ENCODE measurements at regions of chr3 and their contacts with region 1.

Region 1: GRCh38 chr3:102089904-102090492 is 240.7 kb downstream of the NFKBIZ start:
- DNase-seq: peak; percentile 89
- ATAC-seq: peak; percentile 89
- H3K4me3 ChIP-seq: no peak overlapping the region
- H3K27ac ChIP-seq: peak overlapping the region; percentile 97
- H3K4me1 ChIP-seq: peaks cover 30% of the 10 kb centered on the region
- H3K27me3 ChIP-seq: no peaks in the 10 kb centered on the region
- CTCF ChIP-seq: no peak

Region 2: DNA sequence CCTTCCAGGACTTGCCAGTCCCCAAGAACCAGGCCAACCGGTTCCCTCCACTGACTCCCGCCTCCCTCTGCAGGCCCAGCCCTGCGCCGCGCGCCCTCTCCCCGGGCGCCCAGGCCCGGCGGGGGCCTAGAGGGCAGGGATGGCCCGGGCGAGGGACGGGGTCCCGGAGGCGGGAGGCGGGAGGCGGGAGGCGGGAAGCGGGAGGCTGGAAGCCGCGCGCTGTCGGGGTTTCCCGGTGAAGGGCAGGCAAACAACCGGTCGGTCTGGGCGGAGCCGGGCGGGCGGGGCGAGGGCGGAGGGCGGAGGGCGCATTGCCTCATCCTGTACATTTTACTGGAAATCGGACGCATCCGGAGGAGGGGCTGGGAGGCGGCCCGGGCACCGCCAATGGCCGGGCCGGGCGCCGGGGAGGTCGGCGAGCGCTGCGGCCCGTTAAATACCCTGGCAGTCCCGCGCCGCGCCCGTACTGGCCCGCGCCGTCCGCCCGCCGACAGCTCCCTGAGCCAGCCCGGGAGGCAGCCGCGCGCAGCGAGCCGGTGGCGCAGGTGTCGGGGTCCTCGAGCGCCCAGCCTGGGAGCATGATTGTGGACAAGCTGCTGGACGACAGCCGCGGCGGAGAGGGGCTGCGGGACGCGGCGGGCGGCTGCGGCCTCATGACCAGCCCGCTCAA is 240.8 kb before region 1 on chr3 and contains the start of gene NFKBIZ:
- CTCF ChIA-PET with region 1: no interaction called
- POLR2A ChIA-PET with region 1: no interaction called
- intact Hi-C with region 1: loop called (anchors 5 kb)
- DNase-seq: peak; percentile 95
- ATAC-seq: peak; percentile 77
- H3K4me3 ChIP-seq: peak within 1 kb of the TSS; percentile 98
- H3K27ac ChIP-seq: peak within 1 kb of the TSS; percentile 76
- H3K4me1 ChIP-seq: peaks cover 23% of the 10 kb centered on the region
- H3K27me3 ChIP-seq: no peaks in the 10 kb centered on the region
- CTCF ChIP-seq: no peak
- total RNA-seq, gene NFKBIZ: 63.0 and 70.2 TPM in 2 replicates

Region 3: DNA sequence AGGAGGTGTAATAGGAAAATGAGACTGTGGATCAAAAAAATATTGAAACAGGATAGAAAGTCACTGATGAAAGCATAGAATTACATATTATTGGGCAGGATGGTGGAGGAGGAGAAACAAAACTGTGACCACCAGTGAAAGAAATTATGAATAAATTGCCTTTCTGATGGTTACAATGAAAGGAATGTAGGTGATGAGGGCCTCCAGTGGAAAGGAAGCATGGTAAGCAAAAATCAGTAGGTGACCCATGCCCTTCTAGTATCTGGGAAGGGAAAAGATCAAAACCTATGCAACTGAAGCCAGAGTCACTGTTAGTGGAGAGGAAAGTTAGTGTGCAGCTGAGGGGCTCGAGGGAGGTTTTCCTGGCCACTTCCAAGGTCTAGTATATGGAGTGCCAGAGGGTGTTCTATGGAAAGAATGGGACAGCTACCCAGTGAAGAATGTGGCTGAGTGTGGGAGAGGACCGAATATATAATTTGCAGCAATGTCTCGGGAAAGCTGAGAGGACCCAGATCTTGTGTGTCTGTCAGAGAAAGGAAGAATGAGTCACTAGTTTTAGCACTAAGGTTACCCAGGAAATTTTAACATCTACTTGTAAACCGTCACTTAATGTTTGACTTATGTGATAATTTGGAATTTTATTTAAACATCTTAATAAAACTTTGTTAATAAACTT is 94.5 kb before region 1 on chr3:
- CTCF ChIA-PET with region 1: no interaction called
- POLR2A ChIA-PET with region 1: no interaction called
- intact Hi-C with region 1: loop called (anchors 5 kb)
- DNase-seq: peak; percentile 63
- ATAC-seq: peak; percentile 87
- H3K4me3 ChIP-seq: no peak overlapping the region
- H3K27ac ChIP-seq: peak overlapping the region; percentile 61
- H3K4me1 ChIP-seq: peaks cover 27% of the 10 kb centered on the region
- H3K27me3 ChIP-seq: no peaks in the 10 kb centered on the region
- CTCF ChIP-seq: no peak

Region 4: GRCh38 chr3:102053375-102053989 is 36.5 kb before region 1 on chr3:
- CTCF ChIA-PET with region 1: no interaction called
- POLR2A ChIA-PET with region 1: no interaction called
- intact Hi-C with region 1: loop called (anchors 1 kb)
- DNase-seq: peak; percentile 80
- ATAC-seq: peak; percentile 96
- H3K4me3 ChIP-seq: no peak overlapping the region
- H3K27ac ChIP-seq: peak overlapping the region; percentile 15
- H3K4me1 ChIP-seq: peaks cover 17% of the 10 kb centered on the region
- H3K27me3 ChIP-seq: no peaks in the 10 kb centered on the region
- CTCF ChIP-seq: no peak

Region 5: GRCh38 chr3:102124301-102125158 is 34.5 kb after region 1 on chr3:
- CTCF ChIA-PET with region 1: no interaction called
- POLR2A ChIA-PET with region 1: no interaction called
- intact Hi-C with region 1: loop called (anchors 1 kb)
- DNase-seq: peak; percentile 52
- ATAC-seq: peak; percentile 49
- H3K4me3 ChIP-seq: no peak overlapping the region
- H3K27ac ChIP-seq: peak overlapping the region; percentile 88
- H3K4me1 ChIP-seq: peaks cover 35% of the 10 kb centered on the region
- H3K27me3 ChIP-seq: no peaks in the 10 kb centered on the region
- CTCF ChIP-seq: no peak

Region 6: GRCh38 chr3:102136183-102136582 is 46.2 kb after region 1 on chr3:
- CTCF ChIA-PET with region 1: no interaction called
- POLR2A ChIA-PET with region 1: no interaction called
- intact Hi-C with region 1: loop called (anchors 2 kb)
- DNase-seq: peak; percentile 84
- ATAC-seq: peak; percentile 94
- H3K4me3 ChIP-seq: peak overlapping the region; percentile 39; the same call in 1 of the 2 replicates
- H3K27ac ChIP-seq: peak overlapping the region; percentile 94
- H3K4me1 ChIP-seq: peaks cover 18% of the 10 kb centered on the region
- H3K27me3 ChIP-seq: no peaks in the 10 kb centered on the region
- CTCF ChIP-seq: no peak